ENCODE measurements at regions of chr4 and their contacts with region 1.

Region 1: GRCh38 chr4:77052352-77052751 is 23.4 kb downstream of the CCNI start:
- DNase-seq: peak; percentile 70 to 80 (median 73)
- H3K4me3 ChIP-seq: no peak overlapping the region
- H3K27ac ChIP-seq: no peak overlapping the region
- H3K4me1 ChIP-seq: peaks cover 0 to 3% (median 0%) of the 10 kb centered on the region in 4 experiments
- H3K27me3 ChIP-seq: no peaks in the 10 kb centered on the region

Region 2: GRCh38 chr4:76920715-76921114 is 131.6 kb before region 1 on chr4:
- CTCF ChIA-PET with region 1: no interaction called
- POLR2A ChIA-PET with region 1: no interaction called
- DNase-seq: no peak
- H3K4me3 ChIP-seq: no peak overlapping the region
- H3K27ac ChIP-seq: no peak overlapping the region
- H3K4me1 ChIP-seq: no peaks in the 10 kb centered on the region
- H3K27me3 ChIP-seq: no peaks in the 10 kb centered on the region

Region 3: DNA sequence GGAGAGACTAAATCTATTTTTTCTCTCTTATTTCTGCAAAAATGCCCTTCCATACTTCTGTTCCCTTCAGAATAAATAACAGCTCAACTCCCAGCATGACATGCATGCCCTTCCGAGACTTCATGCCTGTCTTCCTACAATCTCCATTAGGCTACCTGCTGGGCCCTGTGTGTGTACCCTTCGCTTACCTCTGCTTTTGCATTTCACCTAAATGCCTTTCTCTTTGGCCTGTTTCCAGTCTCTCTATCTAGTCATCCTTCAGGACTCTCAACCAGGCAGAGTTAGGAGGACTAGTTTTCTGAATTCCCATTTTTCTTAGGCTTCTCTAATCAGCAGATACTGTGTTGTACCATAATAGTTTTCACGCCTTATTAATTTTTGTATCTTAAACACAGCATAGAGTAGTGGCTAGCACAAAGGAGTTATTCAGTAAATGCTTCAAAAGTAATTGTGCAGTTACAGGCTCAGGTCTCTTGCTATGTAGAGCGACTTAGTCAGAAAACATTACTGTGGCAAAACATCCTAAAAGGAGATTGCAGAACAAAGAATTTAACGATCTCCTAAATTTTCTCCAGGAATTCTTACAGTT is 82.3 kb before region 1 on chr4:
- CTCF ChIA-PET with region 1: no interaction called
- POLR2A ChIA-PET with region 1: no interaction called
- DNase-seq: no peak
- H3K4me3 ChIP-seq: no peak overlapping the region
- H3K27ac ChIP-seq: no peak overlapping the region
- H3K4me1 ChIP-seq: peaks cover 0 to 3% (median 1%) of the 10 kb centered on the region in 4 experiments
- H3K27me3 ChIP-seq: no peaks in the 10 kb centered on the region

Region 4: GRCh38 chr4:77065382-77065781 is 13.0 kb after region 1 on chr4:
- CTCF ChIA-PET with region 1: interaction called, 14 read pairs
- POLR2A ChIA-PET with region 1: interaction called, 3 read pairs
- DNase-seq: no peak
- H3K4me3 ChIP-seq: no peak overlapping the region
- H3K27ac ChIP-seq: no peak overlapping the region
- H3K4me1 ChIP-seq: peaks cover 0 to 3% (median 1%) of the 10 kb centered on the region in 4 experiments
- H3K27me3 ChIP-seq: no peaks in the 10 kb centered on the region

Region 5: DNA sequence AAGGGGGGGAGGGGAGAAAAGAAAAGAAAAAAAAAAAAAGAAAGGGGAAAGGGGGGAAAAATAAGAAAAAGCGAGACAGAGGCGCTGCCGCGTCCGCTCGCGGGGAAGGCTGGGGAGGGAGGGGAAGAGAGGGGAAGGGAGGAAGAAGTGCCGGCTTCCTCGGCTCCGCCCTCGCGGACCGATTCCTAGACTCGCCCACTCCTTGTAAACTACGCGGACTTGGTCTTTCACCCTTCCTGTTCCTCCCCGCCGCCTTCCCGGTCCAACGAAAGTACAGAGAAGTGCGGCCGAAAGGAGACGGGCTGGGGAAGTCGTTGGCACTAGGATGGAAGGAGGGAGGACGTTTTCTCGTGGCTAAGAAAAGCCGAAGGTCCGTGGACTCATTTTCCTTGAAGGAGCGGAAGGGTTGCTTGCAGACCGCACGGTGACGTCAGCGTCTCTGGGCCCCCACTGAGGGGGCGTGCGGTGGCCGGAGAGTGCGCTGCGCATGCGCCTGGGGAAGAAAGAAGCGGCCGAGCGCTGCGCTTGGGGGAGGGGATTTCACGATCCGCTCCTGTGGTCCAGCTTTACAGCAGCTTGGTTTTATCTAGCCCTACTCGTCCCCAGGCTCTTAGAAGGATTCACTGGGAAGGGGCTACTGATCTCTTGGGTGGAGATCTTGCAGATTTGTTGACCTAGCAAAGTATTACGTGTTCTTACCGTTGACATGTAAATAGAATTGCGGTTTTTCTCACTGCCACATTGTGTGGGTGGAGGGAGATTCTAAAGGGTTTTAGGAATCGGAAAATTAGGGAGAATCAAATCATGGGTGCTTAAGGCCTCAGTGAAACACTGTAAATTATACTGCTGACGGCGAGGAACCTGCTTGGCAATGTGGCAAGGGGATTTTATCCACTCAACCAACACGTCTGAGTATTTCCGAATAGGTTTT is 23.8 kb after region 1 on chr4 and contains the start of gene CCNI:
- CTCF ChIA-PET with region 1: interaction called, 16 read pairs
- POLR2A ChIA-PET with region 1: interaction called, 3 read pairs
- DNase-seq: peak; percentile 98
- H3K4me3 ChIP-seq: peak within 1 kb of the TSS; percentile 79 to 99 (median 93)
- H3K27ac ChIP-seq: peak within 1 kb of the TSS; percentile 100
- H3K4me1 ChIP-seq: peaks cover 21 to 55% (median 46%) of the 10 kb centered on the region in 4 experiments
- H3K27me3 ChIP-seq: no peaks in the 10 kb centered on the region

Region 6: DNA sequence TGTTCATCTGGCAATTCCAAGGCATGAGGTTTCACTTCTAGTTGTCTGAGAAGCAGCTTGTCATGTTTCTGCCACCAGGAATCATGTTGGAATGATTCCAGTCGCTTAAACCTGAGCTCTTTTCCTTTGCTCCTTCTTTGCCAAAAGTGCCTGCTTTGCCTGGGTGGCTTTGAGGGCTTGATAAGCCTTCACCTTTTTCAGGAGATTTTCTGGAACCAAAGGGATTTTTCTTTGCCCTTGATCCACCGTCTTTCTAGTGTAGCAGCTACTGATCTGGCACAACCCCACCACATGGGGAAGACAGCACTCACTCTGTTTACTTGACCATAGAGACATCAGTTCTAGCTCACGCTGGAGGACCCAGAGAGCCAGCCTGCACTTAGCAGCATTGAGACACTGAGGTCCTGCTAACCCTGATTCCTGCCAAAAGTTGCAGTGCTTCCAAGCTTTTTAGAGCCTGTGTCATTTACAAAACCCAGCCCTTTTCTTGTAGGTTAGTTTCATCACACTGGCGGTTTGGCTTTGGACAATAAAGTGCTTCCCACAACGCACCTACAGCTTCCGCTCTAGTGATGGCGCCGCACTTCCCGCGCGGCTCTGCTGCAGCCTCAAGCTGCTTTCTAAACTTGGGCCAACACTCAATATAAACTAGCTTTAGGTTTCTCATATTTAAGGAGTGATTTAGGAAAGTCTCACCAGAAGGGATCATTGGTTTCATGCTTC is 30.7 kb after region 1 on chr4:
- CTCF ChIA-PET with region 1: interaction called, 16 read pairs
- POLR2A ChIA-PET with region 1: no interaction called
- DNase-seq: no peak
- H3K4me3 ChIP-seq: no peak overlapping the region
- H3K27ac ChIP-seq: no peak overlapping the region
- H3K4me1 ChIP-seq: peaks cover 2 to 12% (median 6%) of the 10 kb centered on the region in 4 experiments
- H3K27me3 ChIP-seq: no peaks in the 10 kb centered on the region